ENCODE measurements at regions of chr17 and their contacts with region 1.

Region 1: GRCh38 chr17:3512505-3513171 is 36.8 kb downstream of the ASPA start:
- DNase-seq: no peak
- H3K4me3 ChIP-seq: no peak overlapping the region
- H3K27ac ChIP-seq: no peak overlapping the region
- H3K4me1 ChIP-seq: no peaks in the 10 kb centered on the region
- H3K27me3 ChIP-seq: peaks cover 33% of the 10 kb centered on the region
- CTCF ChIP-seq: no peak

Region 2: DNA sequence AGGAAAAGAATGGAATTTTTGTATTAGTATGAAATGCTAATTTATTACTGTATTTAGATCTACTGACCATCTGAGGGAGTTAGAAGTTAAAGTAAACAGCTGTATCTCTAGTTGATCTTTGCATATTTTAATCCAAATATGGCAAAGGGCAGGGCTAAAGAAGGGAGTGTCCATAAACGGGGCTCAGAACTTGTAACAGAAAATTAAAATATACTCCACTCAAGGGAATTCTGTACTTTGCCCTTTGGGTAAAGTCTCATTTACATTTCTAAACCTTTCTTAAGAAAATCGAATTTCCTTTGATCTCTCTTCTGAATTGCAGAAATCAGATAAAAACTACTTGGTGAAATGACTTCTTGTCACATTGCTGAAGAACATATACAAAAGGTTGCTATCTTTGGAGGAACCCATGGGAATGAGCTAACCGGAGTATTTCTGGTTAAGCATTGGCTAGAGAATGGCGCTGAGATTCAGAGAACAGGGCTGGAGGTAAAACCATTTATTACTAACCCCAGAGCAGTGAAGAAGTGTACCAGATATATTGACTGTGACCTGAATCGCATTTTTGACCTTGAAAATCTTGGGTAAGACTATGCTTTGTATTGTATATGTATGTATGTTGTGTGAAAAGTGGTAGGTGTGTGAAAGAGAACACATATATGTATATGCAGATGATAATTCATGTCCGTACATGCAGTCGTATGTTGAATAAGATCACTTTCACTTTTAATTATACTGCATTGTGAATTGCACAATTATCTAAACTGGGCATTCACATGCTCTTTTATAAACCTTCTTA is 36.6 kb before region 1 on chr17 and contains the start of gene ASPA:
- CTCF ChIA-PET with region 1: no interaction called
- POLR2A ChIA-PET with region 1: no interaction called
- intact Hi-C with region 1: no loop called
- DNase-seq: no peak
- H3K4me3 ChIP-seq: no peak within 1 kb of the TSS
- H3K27ac ChIP-seq: no peak within 1 kb of the TSS
- H3K4me1 ChIP-seq: no peaks in the 10 kb centered on the region
- H3K27me3 ChIP-seq: peaks cover 99% of the 10 kb centered on the region
- CTCF ChIP-seq: no peak
- total RNA-seq, gene ASPA: not detected in 2 replicates

Region 3: GRCh38 chr17:3529817-3530741 is 17.4 kb after region 1 on chr17:
- CTCF ChIA-PET with region 1: no interaction called
- POLR2A ChIA-PET with region 1: interaction called, 11 read pairs
- intact Hi-C with region 1: no loop called
- DNase-seq: no peak
- H3K4me3 ChIP-seq: no peak overlapping the region
- H3K27ac ChIP-seq: no peak overlapping the region
- H3K4me1 ChIP-seq: peaks cover 6% of the 10 kb centered on the region; the same call in 1 of the 2 replicates
- H3K27me3 ChIP-seq: no peaks in the 10 kb centered on the region
- CTCF ChIP-seq: no peak

Measured in PC-9 (cell line).